ENCODE measurements at regions of chr20 and their contacts with region 1.

Region 1: GRCh38 chr20:33606118-33606771 is 55.9 kb upstream of the C20orf144 start:
- DNase-seq: no peak

Region 2: DNA sequence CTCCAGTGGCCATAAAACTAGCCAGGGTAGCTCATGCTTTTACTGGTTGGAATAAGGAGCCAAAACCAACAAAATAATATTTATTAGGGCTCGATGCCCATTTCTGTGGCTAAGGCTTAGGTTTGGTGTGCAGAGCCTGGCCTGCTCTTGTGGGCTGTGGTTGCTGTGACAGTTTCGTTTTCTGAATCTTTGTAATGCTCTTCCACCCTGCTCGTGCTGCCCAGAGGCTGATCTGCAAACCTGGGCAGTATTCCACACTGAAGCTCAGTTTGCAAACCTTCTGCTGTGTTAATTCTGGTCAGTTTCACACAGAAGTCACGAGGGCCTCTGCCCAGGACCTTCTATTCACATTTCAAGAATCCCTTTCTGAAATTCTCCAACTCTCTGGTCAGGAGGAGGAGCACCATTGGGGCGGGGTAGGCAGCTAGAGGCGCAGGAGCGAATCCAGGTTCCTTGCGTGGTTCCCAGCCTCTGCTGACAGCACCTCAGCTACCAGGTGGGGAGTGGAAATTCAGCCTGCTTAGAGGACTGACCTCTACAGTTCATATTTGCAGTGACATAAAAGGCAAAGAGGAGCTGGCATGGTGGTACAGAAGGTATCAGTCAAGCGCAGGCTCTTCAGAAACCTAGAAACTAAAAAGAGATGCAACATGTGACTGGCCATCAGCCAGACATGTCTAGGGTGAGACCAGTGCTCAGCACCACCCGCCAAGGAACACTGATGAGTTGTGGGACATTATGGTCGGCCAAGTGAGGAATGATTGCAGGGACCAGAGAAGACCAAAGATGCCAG is 41.6 kb after region 1 on chr20:
- intact Hi-C with region 1: loop called in 1 of 2 experiments (anchors 1 kb)
- DNase-seq: peak; percentile 79

Region 3: GRCh38 chr20:33810885-33811777 is 204.9 kb after region 1 on chr20 and contains the start of gene CHMP4B:
- intact Hi-C with region 1: no loop called
- DNase-seq: peak; percentile 100
- total RNA-seq, gene CHMP4B: 79.2 to 104 TPM

Region 4: DNA sequence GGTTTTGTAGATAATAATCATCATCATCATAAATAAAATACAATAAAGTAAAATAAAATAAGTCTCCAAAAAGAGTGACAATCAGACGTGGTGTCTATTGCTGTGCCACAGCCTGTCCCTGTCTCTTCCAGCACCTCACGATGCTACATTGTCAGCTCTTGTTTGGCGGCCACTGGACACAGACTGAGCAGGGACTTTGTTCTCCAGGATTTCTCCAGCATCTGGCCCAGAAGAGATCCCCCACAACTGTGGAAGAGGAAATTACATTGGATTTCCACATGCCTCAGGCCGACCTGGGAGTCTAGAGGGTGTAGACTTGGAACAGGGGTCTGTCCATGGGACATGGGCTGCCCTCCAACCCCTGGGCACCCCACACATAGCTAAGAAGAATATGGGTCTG is 348.3 kb after region 1 on chr20:
- intact Hi-C with region 1: loop called in 1 of 2 experiments (anchors 5 kb)
- DNase-seq: no peak

Measured in posterior vena cava (tissue), 2 donors.